ENCODE measurements at regions of chr16 and their contacts with region 1.

Region 1: GRCh38 chr16:69698404-69698803 is 28.0 kb downstream of the NQO1 start:
- DNase-seq: no peak
- H3K4me3 Mint-ChIP-seq: no peak overlapping the region
- H3K27ac Mint-ChIP-seq: no peak overlapping the region
- H3K4me1 Mint-ChIP-seq: no peaks in the 10 kb centered on the region
- H3K27me3 Mint-ChIP-seq: no peaks in the 10 kb centered on the region

Region 2: DNA sequence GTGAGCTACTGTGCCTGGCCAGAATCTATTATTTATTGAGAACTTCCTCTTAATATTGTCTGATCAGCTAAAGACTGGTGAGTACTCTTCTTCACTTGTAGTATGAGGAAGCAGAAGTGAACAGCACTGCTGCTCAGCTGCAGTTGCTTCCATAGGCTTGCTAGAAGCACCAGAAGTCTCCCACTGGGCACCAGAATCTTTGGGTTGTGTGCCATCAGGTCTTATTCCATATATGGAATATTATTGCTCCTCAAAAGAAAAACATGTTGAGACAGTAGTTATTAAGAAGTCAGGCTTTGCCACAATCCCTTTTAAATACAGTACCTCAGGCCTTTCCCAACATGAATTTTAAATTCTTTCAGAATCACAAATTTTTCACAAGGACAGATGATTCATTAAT is 494.2 kb before region 1 on chr16:
- CTCF ChIA-PET with region 1: no interaction called
- intact Hi-C with region 1: no loop called
- DNase-seq: no peak
- H3K4me3 Mint-ChIP-seq: no peak overlapping the region
- H3K27ac Mint-ChIP-seq: no peak overlapping the region
- H3K4me1 Mint-ChIP-seq: peaks cover 16% of the 10 kb centered on the region
- H3K27me3 Mint-ChIP-seq: no peaks in the 10 kb centered on the region

Region 3: GRCh38 chr16:69589434-69590269 is 108.8 kb before region 1 on chr16:
- CTCF ChIA-PET with region 1: no interaction called
- intact Hi-C with region 1: loop called (anchors 5 kb)
- DNase-seq: no peak
- H3K4me3 Mint-ChIP-seq: no peak overlapping the region
- H3K27ac Mint-ChIP-seq: no peak overlapping the region
- H3K4me1 Mint-ChIP-seq: peaks cover 46% of the 10 kb centered on the region
- H3K27me3 Mint-ChIP-seq: no peaks in the 10 kb centered on the region

Measured in activated naive CD4-positive, alpha-beta T cell treated with anti-CD3 and anti-CD28 coated beads for 36 hours (primary cell).